GM10248 (cell line): ENCODE measurements at regions of chr12 and their contacts with region 1.

Region 1: GRCh38 chr12:68040450-68041075 is 51.3 kb downstream of the IFNG-AS1 start:
- DNase-seq: peak; percentile 67
- CTCF ChIP-seq: peak; percentile 88

Region 2: DNA sequence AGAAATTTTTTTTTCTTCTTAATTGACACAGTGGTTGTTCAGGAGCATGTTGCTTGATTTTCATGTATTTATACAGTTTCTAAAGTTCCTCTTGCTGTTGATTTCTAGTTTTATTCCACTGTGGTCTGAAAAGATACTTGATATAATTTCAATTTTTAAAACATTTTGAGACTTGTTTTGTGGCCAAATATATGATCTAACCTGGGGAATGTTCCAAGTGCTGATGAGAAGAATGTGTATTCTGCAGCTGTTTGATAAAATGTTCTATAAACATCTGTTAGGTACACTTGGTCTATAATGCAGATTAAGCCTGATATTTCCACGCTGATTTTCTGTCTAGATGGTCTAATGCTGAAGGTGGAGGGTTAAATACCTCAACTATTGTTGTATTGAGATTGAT is 202.7 kb before region 1 on chr12:
- CTCF ChIA-PET with region 1: no interaction called
- POLR2A ChIA-PET with region 1: no interaction called
- DNase-seq: no peak
- CTCF ChIP-seq: no peak

Region 3: GRCh38 chr12:68020699-68021098 is 19.9 kb before region 1 on chr12:
- CTCF ChIA-PET with region 1: interaction called, 12 read pairs
- POLR2A ChIA-PET with region 1: no interaction called
- DNase-seq: no peak
- CTCF ChIP-seq: no peak

Region 4: GRCh38 chr12:68028647-68029046 is 11.9 kb before region 1 on chr12:
- CTCF ChIA-PET with region 1: interaction called, 17 read pairs
- POLR2A ChIA-PET with region 1: no interaction called
- DNase-seq: no peak
- CTCF ChIP-seq: no peak

Region 5: GRCh38 chr12:68131869-68132405 is 91.4 kb after region 1 on chr12:
- CTCF ChIA-PET with region 1: no interaction called
- POLR2A ChIA-PET with region 1: no interaction called
- DNase-seq: no peak
- CTCF ChIP-seq: no peak